Activated CD4-positive, alpha-beta T cell treated with anti-CD3 and anti-CD28 coated beads for 36 hours (primary cell): ENCODE measurements at regions of chrX and their contacts with region 1.

Region 1: GRCh38 chrX:18390941-18391538 is 34.4 kb upstream of the CDKL5 start:
- DNase-seq: peak; percentile 71
- ATAC-seq: no peak
- H3K4me3 Mint-ChIP-seq: no peak overlapping the region
- H3K27ac Mint-ChIP-seq: no peak overlapping the region
- H3K4me1 Mint-ChIP-seq: no peaks in the 10 kb centered on the region
- H3K27me3 Mint-ChIP-seq: no peaks in the 10 kb centered on the region

Region 2: DNA sequence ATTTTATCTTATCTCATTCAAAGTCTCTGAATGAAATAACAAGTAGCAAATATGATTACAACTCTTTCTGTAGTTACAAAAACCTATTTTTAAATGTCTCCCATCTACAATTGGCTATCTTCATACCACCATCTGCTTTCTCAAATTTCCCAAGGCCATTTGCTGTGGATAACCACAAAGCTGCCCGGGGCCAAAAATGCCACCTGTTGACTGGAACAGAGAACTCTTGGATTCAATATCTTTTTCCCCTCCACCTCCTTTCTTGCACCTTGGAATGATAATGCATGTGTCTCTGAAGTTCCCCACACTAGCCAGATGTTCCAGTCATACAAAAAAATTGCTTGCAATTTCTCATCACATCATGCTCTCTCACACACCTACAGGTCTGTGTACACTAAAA is 747.0 kb before region 1 on chrX:
- CTCF ChIA-PET with region 1: no interaction called
- POLR2A ChIA-PET with region 1: no interaction called
- intact Hi-C with region 1: no loop called
- DNase-seq: no peak
- ATAC-seq: no peak
- H3K4me3 Mint-ChIP-seq: no peak overlapping the region
- H3K27ac Mint-ChIP-seq: no peak overlapping the region
- H3K4me1 Mint-ChIP-seq: peaks cover 9% of the 10 kb centered on the region
- H3K27me3 Mint-ChIP-seq: no peaks in the 10 kb centered on the region

Region 3: GRCh38 chrX:18448416-18448815 is 57.4 kb after region 1 on chrX:
- CTCF ChIA-PET with region 1: no interaction called
- POLR2A ChIA-PET with region 1: no interaction called
- intact Hi-C with region 1: no loop called
- DNase-seq: no peak
- ATAC-seq: no peak
- H3K4me3 Mint-ChIP-seq: no peak overlapping the region
- H3K27ac Mint-ChIP-seq: no peak overlapping the region
- H3K4me1 Mint-ChIP-seq: peaks cover 2% of the 10 kb centered on the region
- H3K27me3 Mint-ChIP-seq: no peaks in the 10 kb centered on the region

Region 4: GRCh38 chrX:18674788-18675735 is 284.0 kb after region 1 on chrX:
- CTCF ChIA-PET with region 1: no interaction called
- POLR2A ChIA-PET with region 1: no interaction called
- intact Hi-C with region 1: loop called in 1 of 2 experiments (anchors 1 kb)
- DNase-seq: peak; percentile 82
- ATAC-seq: peak; percentile 81
- H3K4me3 Mint-ChIP-seq: peak overlapping the region; percentile 63
- H3K27ac Mint-ChIP-seq: peak overlapping the region; percentile 80
- H3K4me1 Mint-ChIP-seq: peaks cover 6% of the 10 kb centered on the region
- H3K27me3 Mint-ChIP-seq: no peaks in the 10 kb centered on the region

Region 5: GRCh38 chrX:18899796-18900447 is 508.9 kb after region 1 on chrX:
- CTCF ChIA-PET with region 1: no interaction called
- POLR2A ChIA-PET with region 1: no interaction called
- intact Hi-C with region 1: loop called in 1 of 2 experiments (anchors 1 kb)
- DNase-seq: peak; percentile 30
- ATAC-seq: no peak
- H3K4me3 Mint-ChIP-seq: no peak overlapping the region
- H3K27ac Mint-ChIP-seq: no peak overlapping the region
- H3K4me1 Mint-ChIP-seq: no peaks in the 10 kb centered on the region
- H3K27me3 Mint-ChIP-seq: no peaks in the 10 kb centered on the region

Region 6: DNA sequence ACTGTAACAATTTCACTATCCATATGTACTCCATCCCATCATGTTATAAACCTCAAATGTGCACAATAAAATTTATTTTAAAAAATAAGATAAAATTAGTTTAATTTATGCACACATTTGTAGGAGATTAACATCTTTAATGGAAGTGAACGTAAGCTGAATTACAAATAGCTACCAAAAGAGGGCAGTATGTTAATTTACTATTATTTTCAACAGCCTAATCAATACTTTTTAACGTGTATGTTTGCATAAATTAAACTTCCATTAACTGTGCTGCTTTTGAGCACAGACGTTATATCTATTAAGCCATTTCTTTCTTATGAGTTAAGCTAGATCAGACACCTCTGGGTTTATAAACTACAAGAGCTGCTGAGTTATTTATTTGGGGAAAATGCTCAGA is 649.3 kb after region 1 on chrX:
- CTCF ChIA-PET with region 1: no interaction called
- POLR2A ChIA-PET with region 1: no interaction called
- intact Hi-C with region 1: loop called in 1 of 2 experiments (anchors 5 kb)
- DNase-seq: no peak
- ATAC-seq: no peak
- H3K4me3 Mint-ChIP-seq: no peak overlapping the region
- H3K27ac Mint-ChIP-seq: no peak overlapping the region
- H3K4me1 Mint-ChIP-seq: no peaks in the 10 kb centered on the region
- H3K27me3 Mint-ChIP-seq: no peaks in the 10 kb centered on the region